ENCODE measurements at regions of chr4 and their contacts with region 1.

Region 1: DNA sequence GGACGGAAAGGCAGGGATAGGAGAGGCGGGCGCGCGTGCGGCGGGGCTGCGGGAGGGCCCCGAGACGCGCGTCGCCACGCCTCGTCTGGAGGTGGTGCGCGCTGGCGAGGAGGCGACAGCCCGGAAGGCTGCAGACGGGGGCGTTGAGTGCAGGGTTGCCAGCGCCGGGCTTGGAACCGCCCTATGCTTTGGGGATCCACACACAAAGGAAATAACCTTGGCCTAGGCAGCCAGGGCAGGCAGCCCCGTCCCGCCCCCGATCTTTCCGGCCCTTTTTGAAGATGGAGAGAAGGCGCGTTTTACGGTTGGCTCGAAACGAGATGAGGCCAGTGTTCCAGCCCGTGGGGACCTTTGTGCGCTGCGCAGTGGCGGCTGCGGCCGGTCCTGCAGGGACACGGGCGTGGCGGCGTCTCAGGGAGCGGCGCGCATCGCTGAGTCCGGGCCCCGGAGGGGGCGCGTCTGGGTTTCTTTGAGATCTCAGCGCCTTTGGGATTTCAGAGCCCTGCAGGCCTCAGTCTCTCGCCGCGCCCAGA is 50.8 kb upstream of the TRIM2 start:
- DNase-seq: no peak
- H3K4me3 ChIP-seq: peak overlapping the region; percentile 29 to 62 (median 57)
- H3K27ac ChIP-seq: peak overlapping the region in 3 of 4 donors; percentile 46 to 57 (median 48)
- H3K4me1 ChIP-seq: peaks cover 0 to 31% (median 20%) of the 10 kb centered on the region in 4 donors
- H3K27me3 ChIP-seq: no peaks in the 10 kb centered on the region
- CTCF ChIP-seq: no peak
- EP300 ChIP-seq: no peak
- POLR2A ChIP-seq: no peak

Region 2: GRCh38 chr4:152729466-152729865 is 423.9 kb before region 1 on chr4:
- intact Hi-C with region 1: no loop called
- DNase-seq: no peak
- H3K4me3 ChIP-seq: no peak overlapping the region
- H3K27ac ChIP-seq: no peak overlapping the region
- H3K4me1 ChIP-seq: no peaks in the 10 kb centered on the region
- H3K27me3 ChIP-seq: no peaks in the 10 kb centered on the region
- CTCF ChIP-seq: no peak
- EP300 ChIP-seq: no peak
- POLR2A ChIP-seq: no peak

Region 3: DNA sequence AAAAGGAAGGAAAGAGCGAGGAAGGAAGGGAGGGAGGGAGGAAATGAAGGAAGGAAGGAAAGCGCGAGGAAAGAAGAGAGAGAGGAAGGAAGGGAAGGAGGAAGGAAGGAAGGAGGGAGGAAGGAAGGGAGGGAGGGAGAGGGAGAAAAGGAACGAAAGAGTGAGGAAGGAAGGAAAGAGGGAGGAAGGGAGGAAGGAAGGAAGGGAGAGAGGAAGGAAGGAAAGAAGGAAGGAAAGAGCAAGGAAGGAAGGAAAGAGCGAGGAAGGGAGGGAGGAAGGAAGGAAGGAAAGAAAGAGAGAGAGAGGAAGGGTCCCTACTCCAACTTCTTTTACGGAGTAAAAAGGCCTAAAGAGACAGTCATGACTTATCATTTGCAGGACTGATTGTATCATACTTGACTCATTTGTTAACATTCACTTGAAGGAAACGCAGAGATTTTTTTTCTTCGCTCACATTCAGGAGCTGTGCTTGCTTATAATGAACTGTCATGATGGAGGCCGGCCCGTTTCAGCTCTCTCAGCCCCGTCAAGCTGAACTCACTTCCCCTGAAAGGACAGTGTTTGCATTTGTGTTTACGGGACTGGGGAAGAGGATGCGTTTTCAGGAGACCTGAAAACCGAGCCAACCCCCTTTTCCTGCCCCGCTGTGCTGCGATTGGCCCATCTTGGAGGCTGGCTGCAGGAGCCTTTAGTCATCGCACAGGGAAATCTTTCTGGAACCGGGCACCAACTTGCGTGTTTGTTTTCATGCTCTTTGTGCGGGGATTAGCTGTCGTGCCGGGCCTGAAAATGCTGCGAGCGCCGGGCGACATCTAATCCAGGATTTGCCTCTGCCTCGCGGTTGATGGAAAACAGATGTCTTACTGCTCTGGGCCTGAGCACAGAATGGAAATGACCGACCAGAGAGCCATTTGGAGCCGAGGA is 68.6 kb after region 1 on chr4:
- intact Hi-C with region 1: loop called (anchors 5 kb)
- DNase-seq: peak; percentile 88
- H3K4me3 ChIP-seq: peak overlapping the region; percentile 62 to 81 (median 69)
- H3K27ac ChIP-seq: peak overlapping the region; percentile 90 to 96 (median 94)
- H3K4me1 ChIP-seq: peaks cover 0 to 31% (median 18%) of the 10 kb centered on the region in 4 donors
- H3K27me3 ChIP-seq: no peaks in the 10 kb centered on the region
- CTCF ChIP-seq: no peak
- EP300 ChIP-seq: no peak
- POLR2A ChIP-seq: peak in 1 of 2 donors; percentile 10

Region 4: GRCh38 chr4:153266988-153267387 is 113.6 kb after region 1 on chr4:
- intact Hi-C with region 1: no loop called
- DNase-seq: no peak
- H3K4me3 ChIP-seq: no peak overlapping the region
- H3K27ac ChIP-seq: peak overlapping the region in 3 of 4 donors; percentile 36 to 65 (median 45)
- H3K4me1 ChIP-seq: peaks cover 0 to 31% (median 17%) of the 10 kb centered on the region in 4 donors
- H3K27me3 ChIP-seq: no peaks in the 10 kb centered on the region
- CTCF ChIP-seq: no peak
- EP300 ChIP-seq: no peak
- POLR2A ChIP-seq: no peak

Region 5: GRCh38 chr4:153383131-153383530 is 229.7 kb after region 1 on chr4:
- intact Hi-C with region 1: no loop called
- DNase-seq: no peak
- H3K4me3 ChIP-seq: no peak overlapping the region
- H3K27ac ChIP-seq: no peak overlapping the region
- H3K4me1 ChIP-seq: peaks cover 0 to 4% (median 0%) of the 10 kb centered on the region in 4 donors
- H3K27me3 ChIP-seq: no peaks in the 10 kb centered on the region
- CTCF ChIP-seq: no peak
- EP300 ChIP-seq: no peak
- POLR2A ChIP-seq: no peak

Region 6: DNA sequence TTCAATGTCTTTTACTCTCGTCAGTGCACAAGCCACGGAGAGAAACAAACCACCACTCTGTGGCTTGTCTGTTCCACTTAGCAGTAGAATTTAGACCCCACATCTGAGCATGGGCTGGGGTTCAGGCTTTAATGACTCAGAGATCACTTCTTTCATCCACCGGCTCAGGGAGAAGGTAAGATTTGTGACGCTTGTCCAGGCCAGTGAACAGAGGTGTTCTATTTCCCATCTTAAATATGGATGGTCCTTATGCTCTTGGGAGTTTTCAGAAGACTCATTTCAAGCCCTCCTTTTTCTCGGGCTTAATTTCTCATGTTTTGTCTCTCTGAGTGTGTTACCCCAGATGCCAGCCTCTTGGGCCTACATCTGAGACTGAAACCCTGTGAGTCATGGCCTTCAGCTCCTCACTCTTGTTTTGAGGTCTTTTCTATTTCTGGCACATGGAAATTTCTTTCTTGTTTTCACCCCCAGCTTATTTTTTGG is 762.9 kb after region 1 on chr4:
- intact Hi-C with region 1: no loop called
- DNase-seq: no peak
- H3K4me3 ChIP-seq: no peak overlapping the region
- H3K27ac ChIP-seq: no peak overlapping the region
- H3K4me1 ChIP-seq: no peaks in the 10 kb centered on the region
- H3K27me3 ChIP-seq: no peaks in the 10 kb centered on the region
- CTCF ChIP-seq: no peak
- EP300 ChIP-seq: no peak
- POLR2A ChIP-seq: no peak

Measured in sigmoid colon (tissue), 7 donors.